H1 (cell line): ENCODE measurements at regions of chr14 and their contacts with region 1.

Region 1: GRCh38 chr14:90815822-90816700 is at the start of gene TTC7B:
- DNase-seq: peak in 1 of 2 experiments; percentile 77
- H3K4me3 ChIP-seq: peak within 1 kb of the TSS; percentile 53 to 83 (median 64)
- H3K27ac ChIP-seq: no peak within 1 kb of the TSS
- H3K4me1 ChIP-seq: peaks cover 0 to 10% (median 5%) of the 10 kb centered on the region in 4 experiments; a peak in 6 of 7 replicates
- H3K27me3 ChIP-seq: peaks cover 0 to 5% (median 5%) of the 10 kb centered on the region in 4 experiments; a peak in 4 of 7 replicates
- CTCF ChIP-seq: peak in 2 of 3 experiments; percentile 45 to 56; a peak in 3 of 4 replicates
- EP300 ChIP-seq: no peak
- POLR2A ChIP-seq: no peak
- RAD21 ChIP-seq: peak in 1 of 2 experiments; percentile 22; a peak in 1 of 4 replicates
- total RNA-seq, gene TTC7B: 31.2 and 34.0 TPM in 2 replicates

Region 2: DNA sequence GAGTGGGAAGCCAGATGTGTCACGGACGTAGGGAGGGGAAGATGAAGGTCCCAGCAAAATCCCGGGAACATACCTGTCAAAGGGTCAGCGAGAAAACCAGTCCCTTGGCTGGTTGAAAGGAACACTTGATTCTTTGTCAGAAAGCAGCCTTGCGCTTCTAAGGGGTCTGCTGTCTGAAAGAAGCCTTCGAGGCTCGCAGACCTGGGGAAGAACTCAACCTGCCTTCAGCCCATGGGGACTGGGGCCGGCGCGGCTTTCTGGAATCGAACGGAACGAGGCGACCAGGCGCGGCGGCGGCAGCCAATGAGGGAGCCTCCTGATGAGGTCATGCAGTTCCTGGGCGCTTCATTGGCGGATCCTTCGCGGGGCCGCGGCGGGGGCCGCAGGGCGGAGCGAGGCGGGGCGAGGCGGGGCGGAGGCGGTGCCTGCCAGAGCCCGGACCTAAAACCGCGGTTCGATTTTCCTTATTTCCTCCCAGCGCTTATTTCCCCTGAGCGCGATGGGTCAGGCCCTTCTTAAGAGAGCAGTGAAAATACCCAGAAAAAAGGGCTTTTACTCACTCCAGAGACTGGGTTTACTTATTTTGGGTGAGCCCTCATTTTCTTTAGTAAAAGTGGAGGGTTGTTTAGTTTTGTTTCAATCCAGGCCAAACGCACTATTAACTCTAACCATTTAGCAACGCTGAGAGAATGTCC is 12.0 kb after region 1 on chr14:
- CTCF ChIA-PET with region 1: interaction called, 11 read pairs
- POLR2A ChIA-PET with region 1: interaction called, 7 read pairs
- DNase-seq: peak; percentile 72 to 97
- H3K4me3 ChIP-seq: peak overlapping the region; percentile 28 to 49 (median 41); a peak in 7 of 8 replicates
- H3K27ac ChIP-seq: no peak overlapping the region
- H3K4me1 ChIP-seq: peaks cover 3 to 7% (median 3%) of the 10 kb centered on the region in 4 experiments; a peak in 5 of 7 replicates
- H3K27me3 ChIP-seq: peaks cover 10 to 32% (median 23%) of the 10 kb centered on the region in 4 experiments
- CTCF ChIP-seq: no peak
- EP300 ChIP-seq: no peak
- POLR2A ChIP-seq: peak in 1 of 2 experiments; percentile 24; a peak in 1 of 3 replicates
- RAD21 ChIP-seq: no peak